B cell (primary cell): ENCODE measurements at regions of chr7 and their contacts with region 1.

Region 1: DNA sequence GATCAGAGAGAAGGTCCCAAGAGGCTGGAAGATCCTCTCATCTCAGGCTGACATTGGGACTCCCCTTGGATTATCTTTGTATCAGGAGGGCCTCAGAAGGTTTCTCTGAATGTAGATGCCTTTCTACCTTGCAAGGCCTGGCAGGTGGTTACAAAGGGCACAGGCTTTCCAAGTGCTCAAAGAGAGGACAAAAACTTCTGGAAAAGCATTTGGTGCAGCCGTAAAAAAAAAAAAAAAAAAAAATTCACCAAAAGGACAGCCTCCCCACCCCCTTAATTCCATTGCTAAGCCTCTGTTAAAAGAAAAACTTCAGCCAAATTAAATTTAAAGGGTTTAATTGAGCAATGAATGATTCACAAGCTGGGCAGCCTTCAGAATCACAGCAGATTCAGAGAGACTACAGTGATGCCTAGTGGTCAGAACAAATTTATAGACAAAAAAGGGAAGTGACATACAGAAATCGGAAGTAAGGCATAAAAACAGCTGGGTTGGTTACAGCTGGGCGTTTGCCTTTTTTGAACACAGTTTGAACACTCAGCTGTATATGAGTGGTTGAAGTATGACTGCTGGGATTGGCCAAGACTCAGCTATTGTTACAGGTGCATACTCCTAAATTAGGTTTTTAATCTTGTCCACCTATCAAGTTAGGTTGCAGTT is 42.5 kb upstream of the LRGUK start:
- DNase-seq: peak; percentile 49
- ATAC-seq: peak; percentile 65
- H3K4me3 ChIP-seq: no peak overlapping the region
- H3K4me3 Mint-ChIP-seq: no peak overlapping the region
- H3K27ac ChIP-seq: no peak overlapping the region
- H3K27ac Mint-ChIP-seq: no peak overlapping the region
- H3K4me1 ChIP-seq: peaks cover 10 to 12% of the 10 kb centered on the region in 2 donors
- H3K4me1 Mint-ChIP-seq: peaks cover 9% of the 10 kb centered on the region
- H3K27me3 ChIP-seq: no peaks in the 10 kb centered on the region
- H3K27me3 Mint-ChIP-seq: no peaks in the 10 kb centered on the region
- CTCF ChIP-seq: no peak

Region 2: DNA sequence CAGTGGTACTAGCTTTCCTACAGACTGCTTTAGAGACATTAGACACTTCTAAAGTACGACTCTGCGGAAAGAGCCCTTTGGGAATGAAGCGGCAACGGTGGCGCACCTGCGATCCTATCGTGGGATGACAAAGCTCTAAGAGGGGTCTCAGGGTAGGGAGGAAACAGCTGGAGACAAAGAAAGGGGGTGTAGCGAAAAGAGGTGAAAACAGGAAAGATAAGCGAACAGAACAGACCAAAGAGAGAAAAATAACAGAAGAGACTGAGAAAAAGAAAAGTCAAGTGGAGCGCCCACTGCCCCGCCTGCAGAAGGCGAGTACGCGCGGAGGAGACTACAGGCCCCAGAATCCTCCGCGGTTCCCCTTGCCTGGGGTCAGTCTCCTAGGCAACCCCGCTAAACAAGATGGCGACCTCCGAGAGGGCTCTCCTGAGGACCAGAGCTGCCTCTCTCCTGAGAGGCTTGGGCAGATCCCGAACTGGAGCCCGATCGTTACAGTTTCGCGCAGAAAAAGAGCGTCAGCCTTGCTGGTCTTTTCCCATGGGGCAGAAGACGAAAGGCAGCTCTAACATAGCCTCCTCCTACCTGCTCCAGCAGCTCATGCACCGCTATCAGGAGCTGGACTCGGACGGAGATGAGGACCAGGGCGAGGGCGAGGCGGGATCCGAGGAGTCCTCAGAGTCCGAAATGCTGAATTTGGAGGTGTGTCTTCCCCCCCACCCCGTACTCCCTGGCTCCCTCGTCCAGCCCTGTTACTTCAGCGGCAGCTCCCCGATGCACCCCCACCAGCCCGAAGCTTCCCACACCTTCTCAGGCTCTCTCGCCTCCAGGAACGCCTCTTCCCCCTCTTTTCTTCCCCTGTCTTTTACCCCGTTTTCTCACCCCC is 42.6 kb after region 1 on chr7 and contains the start of gene LRGUK:
- CTCF ChIA-PET with region 1: interaction called, 7 read pairs
- POLR2A ChIA-PET with region 1: no interaction called
- intact Hi-C with region 1: loop called (anchors 2 kb)
- DNase-seq: peak; percentile 85
- ATAC-seq: peak; percentile 100
- H3K4me3 ChIP-seq: peak within 1 kb of the TSS; percentile 53 to 72 (median 67)
- H3K4me3 Mint-ChIP-seq: peak within 1 kb of the TSS; percentile 91
- H3K27ac ChIP-seq: no peak within 1 kb of the TSS
- H3K27ac Mint-ChIP-seq: no peak within 1 kb of the TSS
- H3K4me1 ChIP-seq: peaks cover 8 to 11% of the 10 kb centered on the region in 2 donors
- H3K4me1 Mint-ChIP-seq: peaks cover 12% of the 10 kb centered on the region
- H3K27me3 ChIP-seq: peaks cover 0 to 5% (median 0%) of the 10 kb centered on the region in 4 experiments
- H3K27me3 Mint-ChIP-seq: peaks cover 27% of the 10 kb centered on the region
- CTCF ChIP-seq: no peak
- total RNA-seq, gene LRGUK: 0.49 and 0.87 TPM in 2 replicates

Region 3: GRCh38 chr7:134547397-134548054 is 462.9 kb after region 1 on chr7:
- CTCF ChIA-PET with region 1: no interaction called
- POLR2A ChIA-PET with region 1: no interaction called
- intact Hi-C with region 1: no loop called
- DNase-seq: peak; percentile 71
- ATAC-seq: peak; percentile 54
- H3K4me3 ChIP-seq: no peak overlapping the region
- H3K4me3 Mint-ChIP-seq: peak overlapping the region; percentile 49
- H3K27ac ChIP-seq: no peak overlapping the region
- H3K27ac Mint-ChIP-seq: no peak overlapping the region
- H3K4me1 ChIP-seq: peaks cover 3 to 5% of the 10 kb centered on the region in 2 donors
- H3K4me1 Mint-ChIP-seq: peaks cover 4% of the 10 kb centered on the region
- H3K27me3 ChIP-seq: no peaks in the 10 kb centered on the region
- H3K27me3 Mint-ChIP-seq: peaks cover 48% of the 10 kb centered on the region
- CTCF ChIP-seq: peak; percentile 91

Region 4: DNA sequence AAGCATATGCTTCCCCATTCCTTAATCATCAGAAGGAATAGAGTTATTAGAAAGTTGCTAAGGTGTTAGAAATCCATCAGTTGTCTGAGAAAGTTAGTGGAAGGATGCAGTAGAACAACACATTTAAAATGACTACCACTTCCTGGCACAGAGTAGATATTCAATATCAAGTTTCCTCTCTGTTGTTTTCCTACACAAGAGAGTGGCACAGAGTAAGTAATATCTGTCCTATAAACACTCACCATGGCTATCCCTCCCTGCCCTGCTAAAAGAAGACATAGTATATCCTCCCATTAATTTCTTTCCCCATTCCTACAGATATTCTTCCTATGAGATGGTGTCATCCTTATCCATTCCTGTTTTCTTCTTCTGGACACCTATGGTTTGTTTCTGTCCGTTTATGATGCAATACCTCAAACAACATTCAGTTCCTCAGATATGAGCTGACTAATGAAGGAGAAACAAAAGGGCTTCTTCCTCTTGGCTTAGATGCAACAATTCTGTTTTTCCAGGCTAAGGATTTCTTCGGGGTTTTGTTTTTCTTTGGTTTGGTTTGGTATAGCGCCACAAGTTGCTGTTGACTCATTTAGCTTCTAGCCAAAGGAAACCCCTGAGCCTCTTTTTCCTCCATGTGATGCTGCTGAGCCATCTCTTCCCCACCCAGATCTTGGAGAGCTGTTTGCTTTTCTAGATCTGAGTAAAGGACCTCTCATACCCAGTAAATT is 529.2 kb after region 1 on chr7:
- CTCF ChIA-PET with region 1: no interaction called
- POLR2A ChIA-PET with region 1: no interaction called
- intact Hi-C with region 1: no loop called
- DNase-seq: no peak
- ATAC-seq: no peak
- H3K4me3 ChIP-seq: no peak overlapping the region
- H3K4me3 Mint-ChIP-seq: no peak overlapping the region
- H3K27ac ChIP-seq: no peak overlapping the region
- H3K27ac Mint-ChIP-seq: no peak overlapping the region
- H3K4me1 ChIP-seq: no peaks in the 10 kb centered on the region
- H3K4me1 Mint-ChIP-seq: no peaks in the 10 kb centered on the region
- H3K27me3 ChIP-seq: peaks cover 0 to 8% (median 3%) of the 10 kb centered on the region in 4 experiments
- H3K27me3 Mint-ChIP-seq: peaks cover 51% of the 10 kb centered on the region
- CTCF ChIP-seq: no peak

Region 5: DNA sequence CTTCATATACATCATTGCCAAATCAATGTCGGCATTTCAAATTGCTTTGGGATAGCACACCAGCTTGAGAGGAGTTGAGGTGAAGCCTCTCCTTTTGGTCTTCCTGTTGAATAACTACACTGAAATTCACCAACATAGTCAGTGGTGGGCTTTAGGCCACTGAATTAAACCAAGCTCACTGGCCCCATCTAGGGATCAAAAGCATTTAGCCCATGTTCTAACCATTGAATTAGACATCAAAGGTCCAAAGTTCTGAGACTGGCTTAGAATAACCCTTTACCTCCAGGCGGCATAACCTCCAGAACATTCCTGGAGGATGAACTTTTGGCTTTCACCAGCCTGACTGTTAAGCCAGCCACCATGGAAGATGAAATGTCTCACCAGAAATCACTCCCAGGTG is 616.7 kb after region 1 on chr7:
- CTCF ChIA-PET with region 1: no interaction called
- POLR2A ChIA-PET with region 1: no interaction called
- intact Hi-C with region 1: no loop called
- DNase-seq: peak; percentile 29
- ATAC-seq: peak; percentile 31
- H3K4me3 ChIP-seq: no peak overlapping the region
- H3K4me3 Mint-ChIP-seq: no peak overlapping the region
- H3K27ac ChIP-seq: no peak overlapping the region
- H3K27ac Mint-ChIP-seq: no peak overlapping the region
- H3K4me1 ChIP-seq: no peaks in the 10 kb centered on the region
- H3K4me1 Mint-ChIP-seq: no peaks in the 10 kb centered on the region
- H3K27me3 ChIP-seq: no peaks in the 10 kb centered on the region
- H3K27me3 Mint-ChIP-seq: peaks cover 12% of the 10 kb centered on the region
- CTCF ChIP-seq: peak; percentile 55

Region 6: DNA sequence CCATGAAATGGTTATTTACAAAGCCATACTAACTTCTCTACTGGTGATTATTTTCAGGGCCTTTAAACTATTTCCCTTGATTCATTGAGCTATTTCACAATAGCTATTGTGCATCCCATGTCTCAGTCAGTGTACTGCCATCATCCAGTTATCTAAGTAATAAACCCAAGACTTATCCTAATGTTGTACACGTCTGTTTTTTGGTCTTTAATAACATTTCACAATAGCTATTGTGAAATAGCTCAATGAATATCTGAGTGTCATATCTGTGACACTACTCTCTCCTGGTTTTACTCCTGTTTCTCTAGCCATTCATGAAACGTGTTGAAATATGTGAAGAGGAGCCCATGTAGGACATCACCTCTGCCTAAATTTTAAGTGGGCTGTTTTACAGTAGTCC is 1026.8 kb after region 1 on chr7:
- CTCF ChIA-PET with region 1: no interaction called
- POLR2A ChIA-PET with region 1: no interaction called
- intact Hi-C with region 1: no loop called
- DNase-seq: no peak
- ATAC-seq: no peak
- H3K4me3 ChIP-seq: no peak overlapping the region
- H3K4me3 Mint-ChIP-seq: no peak overlapping the region
- H3K27ac ChIP-seq: no peak overlapping the region
- H3K27ac Mint-ChIP-seq: no peak overlapping the region
- H3K4me1 ChIP-seq: no peaks in the 10 kb centered on the region
- H3K4me1 Mint-ChIP-seq: no peaks in the 10 kb centered on the region
- H3K27me3 ChIP-seq: no peaks in the 10 kb centered on the region
- H3K27me3 Mint-ChIP-seq: no peaks in the 10 kb centered on the region
- CTCF ChIP-seq: no peak